Gastrocnemius medialis (tissue), 4 donors: ENCODE measurements at regions of chr2 and their contacts with region 1.

Region 1: DNA sequence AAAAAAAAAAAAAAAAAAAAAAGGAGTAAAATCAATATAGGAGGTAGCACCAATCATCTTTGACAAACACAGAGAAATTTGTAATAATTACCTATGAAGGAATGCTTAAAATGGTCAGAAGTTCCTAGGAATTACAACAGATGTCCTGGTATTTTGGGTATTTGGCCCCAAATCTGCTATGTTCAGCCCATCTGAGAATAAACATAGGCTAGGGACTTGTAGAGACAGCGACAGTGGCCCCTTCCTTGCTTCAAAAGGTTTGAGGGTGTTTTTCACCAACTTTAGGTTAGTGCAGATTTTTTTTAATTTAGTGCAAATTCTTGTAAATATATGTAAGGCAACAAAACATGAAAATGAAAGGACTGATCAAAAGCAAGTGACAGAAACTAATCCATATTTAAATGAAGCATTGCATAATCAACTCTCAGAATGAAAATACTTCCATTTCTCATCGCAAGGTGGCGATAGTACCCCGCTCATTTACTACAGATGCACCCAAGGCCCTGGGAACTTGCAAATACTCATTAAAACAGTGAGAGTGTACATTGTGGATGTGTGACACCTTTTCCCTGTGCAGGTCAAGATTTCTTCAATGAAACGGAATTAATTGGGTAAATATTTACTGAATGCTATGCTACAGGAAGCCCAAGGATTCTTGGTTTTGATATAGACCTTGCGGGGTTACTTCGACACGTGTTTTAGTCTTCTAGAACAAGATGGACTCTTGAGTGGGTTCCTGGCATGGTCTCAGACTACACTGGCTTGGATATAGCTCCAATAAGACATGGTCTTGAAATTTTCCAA is 44.6 kb downstream of the FAM124B start:
- DNase-seq: no peak
- ATAC-seq: peak in 1 of 2 donors; percentile 89
- H3K4me3 ChIP-seq: no peak overlapping the region
- H3K27ac ChIP-seq: no peak overlapping the region
- H3K4me1 ChIP-seq: no peaks in the 10 kb centered on the region
- H3K27me3 ChIP-seq: no peaks in the 10 kb centered on the region
- CTCF ChIP-seq: peak; percentile 76 to 82 (median 82)
- POLR2A ChIP-seq: no peak

Region 2: GRCh38 chr2:224025874-224026273 is 331.4 kb before region 1 on chr2:
- in situ Hi-C with region 1: no loop called
- intact Hi-C with region 1: no loop called
- DNase-seq: no peak
- ATAC-seq: no peak
- H3K4me3 ChIP-seq: no peak overlapping the region
- H3K27ac ChIP-seq: no peak overlapping the region
- H3K4me1 ChIP-seq: no peaks in the 10 kb centered on the region
- H3K27me3 ChIP-seq: no peaks in the 10 kb centered on the region
- CTCF ChIP-seq: no peak
- POLR2A ChIP-seq: no peak

Region 3: GRCh38 chr2:224145751-224146355 is 211.4 kb before region 1 on chr2:
- in situ Hi-C with region 1: no loop called
- intact Hi-C with region 1: no loop called
- DNase-seq: no peak
- ATAC-seq: no peak
- H3K4me3 ChIP-seq: no peak overlapping the region
- H3K27ac ChIP-seq: no peak overlapping the region
- H3K4me1 ChIP-seq: no peaks in the 10 kb centered on the region
- H3K27me3 ChIP-seq: no peaks in the 10 kb centered on the region
- CTCF ChIP-seq: no peak
- POLR2A ChIP-seq: no peak

Region 4: GRCh38 chr2:224650815-224651439 is 293.6 kb after region 1 on chr2:
- in situ Hi-C with region 1: loop called (anchors 5 kb)
- intact Hi-C with region 1: loop called (anchors 1 kb)
- DNase-seq: no peak
- ATAC-seq: peak; percentile 75 to 80
- H3K4me3 ChIP-seq: no peak overlapping the region
- H3K27ac ChIP-seq: no peak overlapping the region
- H3K4me1 ChIP-seq: no peaks in the 10 kb centered on the region
- H3K27me3 ChIP-seq: no peaks in the 10 kb centered on the region
- CTCF ChIP-seq: peak; percentile 61 to 81 (median 74)
- POLR2A ChIP-seq: no peak

Region 5: GRCh38 chr2:224778474-224778877 is 421.2 kb after region 1 on chr2:
- in situ Hi-C with region 1: loop called (anchors 10 to 25 kb)
- intact Hi-C with region 1: loop called (anchors 2 kb)
- DNase-seq: peak in 1 of 2 donors; percentile 37
- ATAC-seq: no peak
- H3K4me3 ChIP-seq: no peak overlapping the region
- H3K27ac ChIP-seq: no peak overlapping the region
- H3K4me1 ChIP-seq: peaks cover 0 to 3% of the 10 kb centered on the region in 2 donors
- H3K27me3 ChIP-seq: no peaks in the 10 kb centered on the region
- CTCF ChIP-seq: peak; percentile 31 to 78 (median 65)
- POLR2A ChIP-seq: no peak